ENCODE measurements at regions of chr1 and their contacts with region 1.

Region 1: GRCh38 chr1:169367486-169368405 is at the starts of genes BLZF1 and NME7:
- DNase-seq: peak; percentile 99
- H3K4me3 Mint-ChIP-seq: peak within 1 kb of the TSS; percentile 43
- H3K27ac Mint-ChIP-seq: no peak within 1 kb of the TSS
- H3K4me1 Mint-ChIP-seq: peaks cover 30% of the 10 kb centered on the region
- H3K27me3 Mint-ChIP-seq: no peaks in the 10 kb centered on the region
- total RNA-seq, gene BLZF1: 10.1 to 10.2 TPM
- total RNA-seq, gene NME7: 12.9 to 15.9 TPM

Region 2: DNA sequence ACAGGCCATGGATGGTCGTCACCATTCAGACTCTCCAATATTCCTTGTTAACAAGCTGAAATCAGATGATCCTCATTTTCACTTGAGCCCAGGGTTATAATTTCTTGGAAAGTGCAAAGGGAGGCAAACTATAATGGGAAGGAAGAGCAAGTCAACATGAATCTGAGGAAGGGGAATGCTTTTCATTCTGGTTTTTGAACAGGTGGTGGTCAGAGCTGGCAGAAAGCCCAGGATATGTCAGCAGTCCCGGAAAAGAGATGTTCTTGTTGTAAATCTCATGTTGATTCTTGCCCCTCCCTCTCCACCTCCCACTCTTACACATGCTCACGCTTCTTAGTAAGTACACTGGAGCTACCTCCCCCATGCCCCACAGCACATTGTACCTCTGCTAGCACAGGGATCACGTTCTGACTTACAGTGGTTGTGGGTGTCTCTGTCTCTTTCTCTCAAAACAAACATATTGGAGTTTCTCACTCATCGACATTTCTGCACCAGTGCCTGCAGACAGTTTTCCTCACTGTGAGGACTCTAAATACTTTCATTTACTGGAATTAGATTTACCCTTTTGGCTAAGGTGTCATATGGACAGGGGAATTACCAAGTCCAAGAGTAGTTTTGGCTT is 901.5 kb before region 1 on chr1:
- CTCF ChIA-PET with region 1: no interaction called
- POLR2A ChIA-PET with region 1: no interaction called
- intact Hi-C with region 1: loop called (anchors 5 kb)
- DNase-seq: peak; percentile 81
- H3K4me3 Mint-ChIP-seq: no peak overlapping the region
- H3K27ac Mint-ChIP-seq: peak overlapping the region; percentile 75
- H3K4me1 Mint-ChIP-seq: peaks cover 58% of the 10 kb centered on the region
- H3K27me3 Mint-ChIP-seq: no peaks in the 10 kb centered on the region

Region 3: DNA sequence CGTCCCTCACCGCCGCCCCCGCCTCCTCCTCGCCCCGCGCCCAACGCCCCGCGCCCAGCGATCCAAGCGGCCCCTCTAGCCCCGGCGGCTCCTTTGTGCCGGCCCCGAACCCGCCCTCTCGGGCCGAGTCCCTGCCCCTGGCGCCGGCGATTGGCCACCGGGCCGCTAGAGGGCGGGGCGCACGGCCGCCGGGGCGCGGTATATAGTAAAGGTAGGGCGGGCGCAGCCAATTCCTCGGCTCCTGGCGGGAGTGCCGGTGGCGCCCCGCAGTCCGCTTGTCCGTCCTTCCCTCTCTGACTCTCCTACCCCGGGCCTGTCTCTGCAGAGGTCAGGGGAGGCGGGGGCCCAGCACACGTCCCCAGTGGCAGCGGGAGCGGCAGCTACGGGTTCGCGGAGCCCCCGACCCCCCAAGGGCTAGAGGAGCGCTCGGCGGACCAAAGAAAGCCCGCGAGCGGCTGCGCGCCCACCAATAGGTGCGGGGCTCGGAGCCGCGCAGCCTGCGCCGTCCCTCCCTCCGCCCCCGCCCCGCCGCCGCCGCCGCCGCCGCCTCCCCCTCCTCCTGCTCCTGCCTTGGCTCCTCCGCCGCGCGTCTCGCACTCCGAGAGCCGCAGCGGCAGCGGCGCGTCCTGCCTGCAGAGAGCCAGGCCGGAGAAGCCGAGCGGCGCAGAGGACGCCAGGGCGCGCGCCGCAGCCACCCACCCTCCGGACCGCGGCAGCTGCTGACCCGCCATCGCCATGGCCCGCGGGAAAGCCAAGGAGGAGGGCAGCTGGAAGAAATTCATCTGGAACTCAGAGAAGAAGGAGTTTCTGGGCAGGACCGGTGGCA is 261.4 kb before region 1 on chr1 and contains the start of gene ATP1B1:
- CTCF ChIA-PET with region 1: no interaction called
- POLR2A ChIA-PET with region 1: no interaction called
- intact Hi-C with region 1: loop called (anchors 1 kb)
- DNase-seq: peak; percentile 82
- H3K4me3 Mint-ChIP-seq: peak within 1 kb of the TSS; percentile 71
- H3K27ac Mint-ChIP-seq: peak within 1 kb of the TSS; percentile 79
- H3K4me1 Mint-ChIP-seq: peaks cover 36% of the 10 kb centered on the region
- H3K27me3 Mint-ChIP-seq: peaks cover 24% of the 10 kb centered on the region
- total RNA-seq, gene ATP1B1: 7.7 to 8.3 TPM

Region 4: DNA sequence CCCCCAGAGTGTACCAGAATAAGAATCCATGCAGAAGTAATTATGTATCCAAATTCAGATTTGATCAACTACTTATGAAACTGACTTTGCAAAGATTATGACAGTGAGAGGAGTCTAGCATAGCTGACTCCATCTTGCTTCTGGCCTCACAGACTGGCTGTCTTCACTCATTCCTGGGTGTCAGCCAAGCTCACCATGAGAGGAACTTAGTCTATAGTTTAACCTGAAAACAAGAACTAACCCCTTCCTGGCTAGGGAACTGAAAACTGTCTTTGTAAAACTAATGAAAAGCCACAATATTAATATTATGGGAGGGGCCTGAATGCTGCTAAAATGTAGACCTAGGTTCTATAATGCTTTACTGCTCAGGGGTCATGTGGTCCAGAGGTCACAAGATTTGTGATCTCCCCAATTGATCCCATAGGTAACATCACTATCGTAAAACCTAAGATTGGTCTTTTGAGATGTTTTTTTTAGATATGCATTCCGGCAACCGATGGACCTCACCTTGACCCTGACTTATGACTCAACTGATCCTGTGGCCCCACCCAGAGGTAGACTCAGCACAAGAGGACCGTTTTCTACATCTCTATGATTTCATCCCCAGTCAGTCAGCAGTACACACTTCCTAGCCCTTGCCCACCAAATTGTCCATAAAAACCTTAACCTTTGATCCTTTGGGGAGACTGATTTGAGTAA is 206.1 kb before region 1 on chr1:
- CTCF ChIA-PET with region 1: no interaction called
- POLR2A ChIA-PET with region 1: no interaction called
- intact Hi-C with region 1: no loop called
- DNase-seq: no peak
- H3K4me3 Mint-ChIP-seq: no peak overlapping the region
- H3K27ac Mint-ChIP-seq: no peak overlapping the region
- H3K4me1 Mint-ChIP-seq: peaks cover 8% of the 10 kb centered on the region
- H3K27me3 Mint-ChIP-seq: no peaks in the 10 kb centered on the region

Region 5: GRCh38 chr1:169390303-169390702 is 22.6 kb after region 1 on chr1:
- CTCF ChIA-PET with region 1: interaction called, 6 read pairs
- POLR2A ChIA-PET with region 1: interaction called, 3 read pairs
- intact Hi-C with region 1: loop called (anchors 1 kb)
- DNase-seq: no peak
- H3K4me3 Mint-ChIP-seq: no peak overlapping the region
- H3K27ac Mint-ChIP-seq: peak overlapping the region; percentile 1
- H3K4me1 Mint-ChIP-seq: peaks cover 7% of the 10 kb centered on the region
- H3K27me3 Mint-ChIP-seq: no peaks in the 10 kb centered on the region

Region 6: GRCh38 chr1:169491845-169492281 is 124.1 kb after region 1 on chr1:
- CTCF ChIA-PET with region 1: no interaction called
- POLR2A ChIA-PET with region 1: interaction called, 4 read pairs
- intact Hi-C with region 1: loop called (anchors 1 kb)
- DNase-seq: peak; percentile 82
- H3K4me3 Mint-ChIP-seq: no peak overlapping the region
- H3K27ac Mint-ChIP-seq: peak overlapping the region; percentile 47
- H3K4me1 Mint-ChIP-seq: peaks cover 56% of the 10 kb centered on the region
- H3K27me3 Mint-ChIP-seq: peaks cover 3% of the 10 kb centered on the region

Region 7: GRCh38 chr1:169711469-169712281 is 343.9 kb after region 1 on chr1 and contains the start of gene SELL:
- CTCF ChIA-PET with region 1: interaction called, 8 read pairs
- POLR2A ChIA-PET with region 1: no interaction called
- intact Hi-C with region 1: loop called (anchors 5 kb)
- DNase-seq: peak; percentile 85
- H3K4me3 Mint-ChIP-seq: peak within 1 kb of the TSS; percentile 71
- H3K27ac Mint-ChIP-seq: peak within 1 kb of the TSS; percentile 81
- H3K4me1 Mint-ChIP-seq: peaks cover 21% of the 10 kb centered on the region
- H3K27me3 Mint-ChIP-seq: peaks cover 2% of the 10 kb centered on the region
- total RNA-seq, gene SELL: 103 to 110 TPM

Region 8: DNA sequence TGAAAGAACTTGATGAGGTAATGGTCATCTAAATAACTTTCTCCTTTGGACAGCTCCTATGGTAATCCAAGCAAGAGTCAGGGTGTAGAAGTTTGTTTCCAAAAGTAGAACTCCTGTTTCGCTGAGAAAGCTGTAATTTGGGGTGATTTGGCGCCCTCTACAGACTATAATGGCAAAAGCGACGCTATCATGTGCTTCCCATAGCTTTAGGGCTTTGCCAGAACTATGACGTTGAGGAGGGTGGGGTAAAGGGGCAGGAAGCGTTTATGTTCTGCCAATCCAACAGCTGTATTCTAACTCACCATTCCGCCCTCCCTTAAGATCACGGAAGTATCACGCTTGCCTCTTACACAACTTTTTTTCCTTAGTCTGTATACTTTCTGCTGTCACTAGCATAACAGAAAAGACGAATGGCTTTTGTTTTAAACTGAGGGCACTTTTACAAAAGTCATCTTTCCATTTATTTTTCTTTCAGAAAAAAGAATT is 1946.1 kb after region 1 on chr1 and contains the start of gene FMO4:
- CTCF ChIA-PET with region 1: no interaction called
- POLR2A ChIA-PET with region 1: no interaction called
- intact Hi-C with region 1: loop called (anchors 5 kb)
- DNase-seq: peak; percentile 88
- H3K4me3 Mint-ChIP-seq: peak within 1 kb of the TSS; percentile 70
- H3K27ac Mint-ChIP-seq: peak within 1 kb of the TSS; percentile 72
- H3K4me1 Mint-ChIP-seq: peaks cover 17% of the 10 kb centered on the region
- H3K27me3 Mint-ChIP-seq: no peaks in the 10 kb centered on the region
- total RNA-seq, gene FMO4: 1.4 to 1.9 TPM